ENCODE measurements at regions of chr12 and their contacts with region 1.

Region 1: GRCh38 chr12:41339784-41340183 is 151.7 kb downstream of the PDZRN4 start:
- DNase-seq: no peak
- H3K4me3 Mint-ChIP-seq: no peak overlapping the region
- H3K27ac Mint-ChIP-seq: no peak overlapping the region
- H3K4me1 Mint-ChIP-seq: no peaks in the 10 kb centered on the region
- H3K27me3 Mint-ChIP-seq: no peaks in the 10 kb centered on the region

Region 2: GRCh38 chr12:41564816-41565215 is 225.0 kb after region 1 on chr12:
- intact Hi-C with region 1: no loop called
- DNase-seq: no peak
- H3K4me3 Mint-ChIP-seq: no peak overlapping the region
- H3K27ac Mint-ChIP-seq: no peak overlapping the region
- H3K4me1 Mint-ChIP-seq: no peaks in the 10 kb centered on the region
- H3K27me3 Mint-ChIP-seq: no peaks in the 10 kb centered on the region

Region 3: GRCh38 chr12:42617622-42618021 is 1277.8 kb after region 1 on chr12:
- intact Hi-C with region 1: loop called (anchors 5 kb)
- DNase-seq: no peak
- H3K4me3 Mint-ChIP-seq: no peak overlapping the region
- H3K27ac Mint-ChIP-seq: no peak overlapping the region
- H3K4me1 Mint-ChIP-seq: no peaks in the 10 kb centered on the region
- H3K27me3 Mint-ChIP-seq: no peaks in the 10 kb centered on the region

Measured in activated CD4-positive, alpha-beta T cell treated with anti-CD3 and anti-CD28 coated beads, Interleukin-2, amount 10 ng/mL, durations not matched to agents 24 days and 14 days (primary cell).